Left ventricle myocardium inferior (tissue), 1 donor: ENCODE measurements at regions of chr16 and their contacts with region 1.

Region 1: GRCh38 chr16:65429494-65430181 is 307.8 kb upstream of the CDH11 start:
- DNase-seq: no peak
- H3K4me3 ChIP-seq: no peak overlapping the region
- H3K27ac ChIP-seq: no peak overlapping the region
- H3K4me1 ChIP-seq: no peaks in the 10 kb centered on the region
- H3K27me3 ChIP-seq: no peaks in the 10 kb centered on the region
- CTCF ChIP-seq: no peak

Region 2: GRCh38 chr16:65375651-65376050 is 54.0 kb before region 1 on chr16:
- intact Hi-C with region 1: loop called (anchors 10 kb)
- DNase-seq: no peak
- H3K4me3 ChIP-seq: no peak overlapping the region
- H3K27ac ChIP-seq: no peak overlapping the region
- H3K4me1 ChIP-seq: peaks cover 10% of the 10 kb centered on the region
- H3K27me3 ChIP-seq: no peaks in the 10 kb centered on the region
- CTCF ChIP-seq: no peak